ENCODE measurements at regions of chr12 and their contacts with region 1.

Region 1: DNA sequence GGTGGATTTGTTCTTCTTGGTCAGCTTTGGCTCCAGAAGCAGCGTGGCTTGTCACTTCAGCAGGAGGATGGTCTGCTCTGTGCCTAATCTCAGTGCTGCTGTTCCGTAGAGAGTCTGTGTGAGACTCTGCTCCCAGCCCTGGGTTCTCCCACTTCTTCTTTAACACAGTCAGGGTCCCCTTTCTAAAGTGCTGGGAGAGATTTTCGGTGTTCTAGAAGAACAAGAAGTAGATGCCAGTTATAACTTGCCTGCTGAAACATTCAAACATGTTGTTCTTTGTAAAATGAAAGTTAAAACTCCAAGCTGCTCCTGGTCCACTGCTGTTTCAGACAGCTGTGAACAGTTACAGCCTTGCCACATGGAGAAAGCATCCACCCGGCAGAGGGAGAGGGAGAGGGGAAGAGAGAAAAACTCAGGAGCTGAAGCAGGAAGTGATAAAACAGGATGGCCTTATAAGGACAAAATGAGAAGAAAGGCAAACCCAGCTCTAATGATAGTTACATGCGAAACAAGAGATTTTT is 55.2 kb upstream of the CERS5 start:
- DNase-seq: peak in 1 of 2 donors; percentile 65
- ATAC-seq: peak; percentile 35 to 56 (median 42)
- H3K4me3 ChIP-seq: peak overlapping the region; percentile 53
- H3K4me3 Mint-ChIP-seq: no peak overlapping the region
- H3K27ac ChIP-seq: peak overlapping the region; percentile 78
- H3K27ac Mint-ChIP-seq: no peak overlapping the region
- H3K4me1 ChIP-seq: peaks cover 35% of the 10 kb centered on the region
- H3K4me1 Mint-ChIP-seq: peaks cover 13 to 19% of the 10 kb centered on the region in 2 donors
- H3K27me3 ChIP-seq: no peaks in the 10 kb centered on the region
- H3K27me3 Mint-ChIP-seq: no peaks in the 10 kb centered on the region
- CTCF ChIP-seq: no peak

Region 2: GRCh38 chr12:50400598-50401364 is 178.4 kb after region 1 on chr12 and contains the start of gene LARP4:
- intact Hi-C with region 1: loop called (anchors 10 kb)
- DNase-seq: peak; percentile 77 to 94
- ATAC-seq: peak; percentile 96 to 98 (median 97)
- H3K4me3 ChIP-seq: peak within 1 kb of the TSS; percentile 56
- H3K4me3 Mint-ChIP-seq: peak within 1 kb of the TSS; percentile 99
- H3K27ac ChIP-seq: peak within 1 kb of the TSS; percentile 80
- H3K27ac Mint-ChIP-seq: peak within 1 kb of the TSS; percentile 92 to 96
- H3K4me1 ChIP-seq: peaks cover 8% of the 10 kb centered on the region
- H3K4me1 Mint-ChIP-seq: peaks cover 35 to 36% of the 10 kb centered on the region in 2 donors
- H3K27me3 ChIP-seq: no peaks in the 10 kb centered on the region
- H3K27me3 Mint-ChIP-seq: peaks cover 0 to 11% of the 10 kb centered on the region in 2 donors
- CTCF ChIP-seq: no peak
- total RNA-seq, gene LARP4: 25.1 to 41.1 (median 35.3) TPM

Measured in natural killer cell (primary cell).